Natural killer cell (primary cell): ENCODE measurements at regions of chr19 and their contacts with region 1.

Region 1: GRCh38 chr19:40553885-40554857 is 22.5 kb upstream of the SHKBP1 start:
- DNase-seq: no peak
- ATAC-seq: no peak
- H3K4me3 ChIP-seq: no peak overlapping the region
- H3K4me3 Mint-ChIP-seq: no peak overlapping the region
- H3K27ac ChIP-seq: no peak overlapping the region
- H3K27ac Mint-ChIP-seq: no peak overlapping the region
- H3K4me1 ChIP-seq: no peaks in the 10 kb centered on the region
- H3K4me1 Mint-ChIP-seq: no peaks in the 10 kb centered on the region
- H3K27me3 ChIP-seq: peaks cover 13% of the 10 kb centered on the region
- H3K27me3 Mint-ChIP-seq: peaks cover 47 to 54% of the 10 kb centered on the region in 2 donors
- CTCF ChIP-seq: no peak

Region 2: DNA sequence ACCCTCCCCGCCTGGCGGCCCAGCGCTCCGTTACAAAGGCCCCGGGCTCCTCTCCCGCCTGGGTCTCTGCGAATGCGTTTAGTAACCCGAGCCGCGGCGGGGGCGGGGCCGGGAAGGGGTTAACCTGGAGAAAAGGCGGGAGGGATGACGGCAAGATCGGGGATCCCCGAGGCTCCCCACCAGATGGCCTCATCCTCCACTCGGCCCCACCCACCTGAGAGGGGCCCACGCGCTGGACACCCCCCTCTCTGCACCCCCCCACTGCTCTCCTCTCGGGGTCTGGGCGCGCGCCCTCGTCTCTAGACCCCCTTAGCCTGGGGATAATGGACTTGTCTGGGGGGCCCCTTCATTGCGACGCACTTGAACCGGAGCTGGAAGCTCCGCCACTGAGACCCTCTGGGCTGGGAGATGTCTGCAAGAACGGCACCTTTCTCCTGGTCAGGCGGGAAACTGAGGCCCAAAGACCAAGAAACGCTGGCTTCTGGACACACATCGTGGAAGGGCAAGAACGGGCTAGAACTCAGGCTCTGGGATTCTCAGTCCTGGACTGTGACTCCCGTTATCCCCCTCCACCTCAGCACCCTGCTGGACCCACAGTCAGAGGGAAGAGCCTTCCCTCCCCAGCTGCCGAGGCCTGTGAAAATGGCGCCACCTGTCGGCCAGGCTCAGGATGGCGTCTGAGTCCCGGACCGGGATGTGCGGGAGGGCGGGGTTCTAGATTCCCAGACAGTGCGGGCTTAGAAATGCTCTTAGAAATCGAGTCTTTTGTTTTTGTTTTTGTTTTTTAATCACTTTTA is 44.1 kb after region 1 on chr19:
- intact Hi-C with region 1: loop called (anchors 5 kb)
- DNase-seq: peak; percentile 86 to 91
- ATAC-seq: peak; percentile 71 to 81 (median 76)
- H3K4me3 ChIP-seq: no peak overlapping the region
- H3K4me3 Mint-ChIP-seq: no peak overlapping the region
- H3K27ac ChIP-seq: no peak overlapping the region
- H3K27ac Mint-ChIP-seq: no peak overlapping the region
- H3K4me1 ChIP-seq: peaks cover 71% of the 10 kb centered on the region
- H3K4me1 Mint-ChIP-seq: peaks cover 24 to 53% of the 10 kb centered on the region in 2 donors
- H3K27me3 ChIP-seq: peaks cover 55% of the 10 kb centered on the region
- H3K27me3 Mint-ChIP-seq: peaks cover 14 to 49% of the 10 kb centered on the region in 2 donors
- CTCF ChIP-seq: peak; percentile 96